Ascending aorta (tissue), 2 donors: ENCODE measurements at regions of chr3 and their contacts with region 1.

Region 1: GRCh38 chr3:14144423-14145075 is 19.7 kb downstream of the TMEM43 start:
- DNase-seq: peak; percentile 70 to 93
- H3K4me3 ChIP-seq: peak overlapping the region; percentile 33 to 38
- H3K27ac ChIP-seq: peak overlapping the region; percentile 89 to 91
- H3K4me1 ChIP-seq: peaks cover 31 to 49% of the 10 kb centered on the region in 2 donors
- H3K27me3 ChIP-seq: no peaks in the 10 kb centered on the region
- CTCF ChIP-seq: no peak

Region 2: DNA sequence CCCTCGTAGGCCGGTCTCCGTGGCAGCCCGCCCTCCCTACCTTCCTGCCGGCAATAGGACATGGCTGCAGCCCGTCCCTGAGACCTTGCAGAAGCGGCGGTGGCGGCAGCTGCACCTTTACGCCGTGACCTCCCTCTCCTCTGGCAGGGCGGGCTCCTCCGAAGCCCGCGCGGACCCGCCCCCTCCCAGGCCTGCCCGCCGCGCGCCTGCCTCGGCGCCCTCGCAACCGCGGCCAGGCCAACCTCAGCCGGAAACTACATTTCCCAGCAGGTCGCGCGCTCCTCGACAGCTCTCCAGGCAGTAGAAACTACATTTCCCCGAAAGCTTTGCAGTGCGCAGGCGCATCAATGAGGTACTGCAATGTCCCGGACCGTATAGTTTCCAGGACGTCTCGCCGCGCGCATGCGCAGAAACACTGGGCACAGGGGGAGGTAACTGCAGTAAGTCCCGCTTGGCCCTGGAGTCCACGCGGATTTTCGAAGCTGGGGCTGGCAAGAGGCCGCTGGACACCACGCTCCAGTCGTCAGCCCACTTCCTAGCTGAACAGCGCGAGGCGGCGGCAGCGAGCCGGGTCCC is 19.8 kb before region 1 on chr3 and contains the starts of genes CHCHD4 and TMEM43:
- intact Hi-C with region 1: loop called (anchors 1 kb)
- DNase-seq: peak; percentile 98 to 100
- H3K4me3 ChIP-seq: peak within 1 kb of the TSS; percentile 84 to 100
- H3K27ac ChIP-seq: peak within 1 kb of the TSS; percentile 96 to 98
- H3K4me1 ChIP-seq: peaks cover 19 to 26% of the 10 kb centered on the region in 2 donors
- H3K27me3 ChIP-seq: no peaks in the 10 kb centered on the region
- CTCF ChIP-seq: peak in 1 of 3 experiments; percentile 2
- total RNA-seq, gene CHCHD4: 1.9 TPM
- total RNA-seq, gene TMEM43: 166 TPM

Region 3: GRCh38 chr3:14178247-14179113 is 33.9 kb after region 1 on chr3 and contains the starts of genes LSM3 and XPC:
- intact Hi-C with region 1: loop called (anchors 1 kb)
- DNase-seq: peak; percentile 92 to 98
- H3K4me3 ChIP-seq: peak within 1 kb of the TSS; percentile 69 to 71
- H3K27ac ChIP-seq: peak within 1 kb of the TSS; percentile 91 to 99
- H3K4me1 ChIP-seq: peaks cover 0 to 31% of the 10 kb centered on the region in 2 donors
- H3K27me3 ChIP-seq: no peaks in the 10 kb centered on the region
- CTCF ChIP-seq: peak in 1 of 3 experiments; percentile 8
- total RNA-seq, gene LSM3: 3.9 TPM
- total RNA-seq, gene XPC: 48.9 TPM

Region 4: DNA sequence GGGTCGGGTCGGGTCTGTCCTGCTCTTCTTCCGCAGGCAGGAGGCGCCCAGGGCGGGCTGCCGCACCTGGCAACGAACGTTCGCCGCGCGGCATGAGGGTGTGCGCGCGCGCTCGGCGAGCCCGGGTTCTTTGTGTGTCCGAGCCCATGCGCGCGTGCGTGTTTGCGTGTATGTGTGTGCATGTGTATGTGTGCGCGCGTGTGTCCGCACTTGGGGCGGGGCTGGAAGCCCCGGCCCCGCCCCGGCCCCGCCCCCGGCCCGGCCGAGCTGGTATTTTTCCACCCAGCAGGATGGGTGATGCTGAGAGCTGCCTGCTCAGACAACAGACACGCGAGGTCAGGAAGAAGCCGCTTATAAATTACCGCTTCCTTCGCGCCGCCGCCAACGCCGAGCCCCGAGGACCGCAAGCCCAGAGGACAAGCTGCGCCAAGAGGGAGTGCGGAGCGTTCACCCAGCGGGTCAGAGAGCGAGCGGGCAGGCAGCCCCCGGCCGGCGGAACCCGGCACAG is 257.8 kb after region 1 on chr3 and contains the start of gene SLC6A6:
- intact Hi-C with region 1: loop called (anchors 10 kb)
- DNase-seq: peak; percentile 88 to 98
- H3K4me3 ChIP-seq: peak within 1 kb of the TSS; percentile 62 to 85
- H3K27ac ChIP-seq: peak within 1 kb of the TSS; percentile 77 to 85
- H3K4me1 ChIP-seq: peaks cover 25 to 33% of the 10 kb centered on the region in 2 donors
- H3K27me3 ChIP-seq: no peaks in the 10 kb centered on the region
- CTCF ChIP-seq: peak in 2 of 3 experiments; percentile 39 to 52
- total RNA-seq, gene SLC6A6: 78.1 TPM